GM10248 (cell line): ENCODE measurements at regions of chr20 and their contacts with region 1.

Region 1: DNA sequence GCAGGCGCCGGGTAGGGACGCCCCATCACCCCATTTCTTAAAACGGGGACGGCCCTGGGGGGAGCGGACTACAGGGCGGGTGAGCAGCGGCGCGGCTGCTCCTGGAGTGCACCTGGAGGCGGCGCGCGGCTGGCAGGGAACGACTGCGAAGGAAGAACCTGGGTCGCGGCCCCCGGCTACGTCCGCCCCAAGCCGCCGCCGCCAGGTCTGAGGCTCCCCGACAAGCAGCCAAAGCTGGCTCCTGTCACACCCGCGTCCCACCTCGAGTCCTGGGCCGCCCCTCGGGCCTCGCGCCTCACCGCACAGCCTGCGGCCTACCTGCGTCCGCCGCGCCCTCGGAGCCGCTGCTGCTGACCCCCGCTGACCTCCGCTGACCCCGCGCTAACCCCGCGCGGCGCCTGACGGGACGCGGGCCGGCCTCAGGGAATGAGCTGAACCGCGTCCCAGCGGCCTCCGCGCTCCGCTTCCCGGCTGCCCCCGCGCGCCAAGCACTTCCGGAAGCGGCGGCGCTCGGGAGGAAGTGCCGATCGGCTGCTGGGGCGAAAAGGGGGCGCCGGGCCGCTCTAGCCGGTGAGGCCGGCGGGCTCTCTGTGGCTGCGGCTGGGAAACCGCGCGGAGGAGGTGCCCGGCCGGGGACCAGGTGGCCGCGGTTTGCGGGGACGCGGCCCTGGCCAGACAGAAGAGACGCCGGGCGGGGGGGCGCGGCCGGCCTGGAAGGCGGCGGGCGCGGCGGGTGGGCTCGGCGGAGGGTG is at the starts of genes ARFRP1 and ZGPAT:
- DNase-seq: peak; percentile 92
- CTCF ChIP-seq: no peak

Region 2: GRCh38 chr20:63686492-63687321 is 21.0 kb before region 1 on chr20:
- CTCF ChIA-PET with region 1: no interaction called
- POLR2A ChIA-PET with region 1: no interaction called
- DNase-seq: no peak
- CTCF ChIP-seq: no peak

Region 3: GRCh38 chr20:63718996-63719395 is 11.3 kb after region 1 on chr20:
- CTCF ChIA-PET with region 1: interaction called, 21 read pairs
- POLR2A ChIA-PET with region 1: interaction called, 8 read pairs
- DNase-seq: no peak
- CTCF ChIP-seq: no peak

Region 4: DNA sequence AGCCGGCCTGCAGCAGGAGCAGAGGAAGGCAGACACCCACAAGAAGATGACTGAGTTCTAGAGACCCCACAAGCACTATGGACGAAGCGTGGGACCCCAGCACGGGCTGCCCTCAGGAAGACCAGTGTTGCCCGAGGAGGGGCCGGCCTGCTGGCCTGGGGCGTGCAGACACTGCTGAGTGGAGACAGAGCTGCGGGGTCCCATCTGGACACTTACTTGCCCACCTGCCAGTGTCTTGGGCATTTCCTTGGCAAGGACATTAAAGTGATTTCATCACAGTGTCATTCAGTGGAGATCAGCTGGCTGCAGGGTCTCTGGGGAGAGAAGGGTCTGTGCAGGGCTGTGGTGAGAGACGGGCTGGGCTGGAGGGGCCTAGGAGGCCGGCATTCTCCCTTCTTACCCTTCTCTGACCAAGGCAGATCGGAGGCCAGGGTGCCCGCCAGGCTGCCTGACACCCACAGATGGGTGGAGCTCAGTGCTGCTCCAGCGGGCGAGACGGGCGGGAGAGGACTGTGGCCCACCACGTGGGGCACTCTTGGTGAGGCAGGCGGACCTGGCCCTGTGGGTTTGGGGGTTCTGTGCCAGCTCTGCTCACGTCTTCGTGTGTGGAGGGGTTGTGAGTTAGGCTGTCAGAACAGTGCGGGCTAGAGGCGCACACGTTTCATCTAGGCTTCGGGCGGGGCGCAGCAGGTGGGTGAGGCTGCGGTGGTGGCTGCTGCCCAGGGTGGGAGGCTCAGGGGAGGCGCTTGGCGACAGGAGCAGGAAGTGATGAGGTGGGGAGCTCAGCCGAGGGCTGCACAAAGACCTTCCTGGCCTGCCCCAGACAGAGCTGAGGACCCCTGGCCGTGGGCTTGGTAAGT is 28.4 kb after region 1 on chr20 and contains the start of gene LIME1:
- CTCF ChIA-PET with region 1: interaction called, 16 read pairs
- POLR2A ChIA-PET with region 1: interaction called, 3 read pairs
- DNase-seq: peak; percentile 57
- CTCF ChIP-seq: no peak